Activated CD8-positive, alpha-beta memory T cell treated with anti-CD3 and anti-CD28 coated beads, Interleukin-2, amount 10 ng/mL, durations not matched to agents 7 days and 5 days (primary cell): ENCODE measurements at regions of chr11 and their contacts with region 1.

Region 1: DNA sequence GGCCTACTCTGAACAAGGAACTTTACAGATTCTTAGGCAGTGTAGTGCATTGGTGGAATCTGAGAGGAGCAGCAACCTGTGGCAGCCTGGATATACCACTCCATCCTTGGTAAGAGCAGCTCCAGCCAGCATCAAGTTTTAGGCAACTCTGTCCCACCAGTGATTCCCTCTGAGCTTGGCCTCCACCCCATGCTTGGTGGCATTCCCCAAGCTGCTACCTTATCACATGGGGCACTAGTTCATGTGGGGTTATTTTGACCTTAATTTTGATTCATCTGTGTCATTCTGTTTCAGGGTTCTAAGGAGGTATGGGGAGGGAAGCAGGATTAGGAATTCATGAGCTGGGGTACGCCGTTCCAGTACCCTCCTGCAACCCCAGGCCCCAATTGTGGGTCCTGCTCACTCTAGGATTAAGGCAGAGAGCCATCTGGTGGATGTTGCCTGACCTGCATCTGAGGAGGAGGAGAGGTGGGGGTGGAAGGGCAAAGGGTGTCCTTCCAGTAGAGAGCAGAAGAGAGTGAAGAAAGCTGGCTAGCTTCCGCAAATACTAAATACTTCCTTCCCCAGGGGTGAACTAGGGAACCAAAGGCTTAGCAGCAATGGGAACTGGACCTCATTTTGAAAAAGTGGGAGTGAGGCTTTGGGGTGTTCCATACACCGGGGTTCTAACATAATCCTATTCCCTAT is 10.5 kb downstream of the LRRC51 start:
- DNase-seq: peak; percentile 72
- ATAC-seq: peak; percentile 83
- H3K4me3 Mint-ChIP-seq: no peak overlapping the region
- H3K27ac Mint-ChIP-seq: no peak overlapping the region
- H3K4me1 Mint-ChIP-seq: peaks cover 5% of the 10 kb centered on the region
- H3K27me3 Mint-ChIP-seq: no peaks in the 10 kb centered on the region

Region 2: GRCh38 chr11:72012897-72013721 is 78.0 kb before region 1 on chr11:
- CTCF ChIA-PET with region 1: no interaction called
- DNase-seq: no peak
- ATAC-seq: no peak
- H3K4me3 Mint-ChIP-seq: no peak overlapping the region
- H3K27ac Mint-ChIP-seq: no peak overlapping the region
- H3K4me1 Mint-ChIP-seq: no peaks in the 10 kb centered on the region
- H3K27me3 Mint-ChIP-seq: no peaks in the 10 kb centered on the region

Region 3: GRCh38 chr11:72030472-72031045 is 60.6 kb before region 1 on chr11:
- CTCF ChIA-PET with region 1: interaction called, 91 read pairs
- DNase-seq: no peak
- ATAC-seq: no peak
- H3K4me3 Mint-ChIP-seq: no peak overlapping the region
- H3K27ac Mint-ChIP-seq: no peak overlapping the region
- H3K4me1 Mint-ChIP-seq: peaks cover 11% of the 10 kb centered on the region
- H3K27me3 Mint-ChIP-seq: no peaks in the 10 kb centered on the region

Region 4: GRCh38 chr11:72058416-72059034 is 32.6 kb before region 1 on chr11:
- CTCF ChIA-PET with region 1: no interaction called
- DNase-seq: no peak
- ATAC-seq: no peak
- H3K4me3 Mint-ChIP-seq: no peak overlapping the region
- H3K27ac Mint-ChIP-seq: no peak overlapping the region
- H3K4me1 Mint-ChIP-seq: peaks cover 8% of the 10 kb centered on the region
- H3K27me3 Mint-ChIP-seq: no peaks in the 10 kb centered on the region

Region 5: DNA sequence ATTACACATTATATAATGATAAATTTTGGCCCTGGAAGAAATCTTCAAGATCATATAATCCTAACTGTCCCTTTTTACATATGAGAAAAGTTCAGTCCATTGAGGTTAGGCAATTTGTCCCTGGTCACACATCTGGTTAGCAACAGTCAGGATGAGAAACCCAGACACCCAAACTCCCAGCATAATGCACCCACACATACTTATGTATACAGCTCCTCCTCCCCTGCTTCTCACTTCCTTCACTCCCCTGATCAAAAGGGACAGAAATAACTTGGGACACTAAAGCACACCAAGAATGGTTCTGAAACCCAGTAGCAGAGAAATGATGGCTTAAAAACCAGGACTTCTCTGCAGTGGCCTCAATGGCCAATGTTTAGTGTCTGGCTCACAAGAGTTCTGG is 21.9 kb before region 1 on chr11:
- CTCF ChIA-PET with region 1: no interaction called
- DNase-seq: no peak
- ATAC-seq: no peak
- H3K4me3 Mint-ChIP-seq: no peak overlapping the region
- H3K27ac Mint-ChIP-seq: peak overlapping the region; percentile 52
- H3K4me1 Mint-ChIP-seq: peaks cover 53% of the 10 kb centered on the region
- H3K27me3 Mint-ChIP-seq: no peaks in the 10 kb centered on the region

Region 6: GRCh38 chr11:72080975-72081644 is 10.0 kb before region 1 on chr11:
- CTCF ChIA-PET with region 1: interaction called, 17 read pairs
- DNase-seq: no peak
- ATAC-seq: no peak
- H3K4me3 Mint-ChIP-seq: peak overlapping the region; percentile 84
- H3K27ac Mint-ChIP-seq: peak overlapping the region; percentile 97
- H3K4me1 Mint-ChIP-seq: peaks cover 48% of the 10 kb centered on the region
- H3K27me3 Mint-ChIP-seq: no peaks in the 10 kb centered on the region

Region 7: DNA sequence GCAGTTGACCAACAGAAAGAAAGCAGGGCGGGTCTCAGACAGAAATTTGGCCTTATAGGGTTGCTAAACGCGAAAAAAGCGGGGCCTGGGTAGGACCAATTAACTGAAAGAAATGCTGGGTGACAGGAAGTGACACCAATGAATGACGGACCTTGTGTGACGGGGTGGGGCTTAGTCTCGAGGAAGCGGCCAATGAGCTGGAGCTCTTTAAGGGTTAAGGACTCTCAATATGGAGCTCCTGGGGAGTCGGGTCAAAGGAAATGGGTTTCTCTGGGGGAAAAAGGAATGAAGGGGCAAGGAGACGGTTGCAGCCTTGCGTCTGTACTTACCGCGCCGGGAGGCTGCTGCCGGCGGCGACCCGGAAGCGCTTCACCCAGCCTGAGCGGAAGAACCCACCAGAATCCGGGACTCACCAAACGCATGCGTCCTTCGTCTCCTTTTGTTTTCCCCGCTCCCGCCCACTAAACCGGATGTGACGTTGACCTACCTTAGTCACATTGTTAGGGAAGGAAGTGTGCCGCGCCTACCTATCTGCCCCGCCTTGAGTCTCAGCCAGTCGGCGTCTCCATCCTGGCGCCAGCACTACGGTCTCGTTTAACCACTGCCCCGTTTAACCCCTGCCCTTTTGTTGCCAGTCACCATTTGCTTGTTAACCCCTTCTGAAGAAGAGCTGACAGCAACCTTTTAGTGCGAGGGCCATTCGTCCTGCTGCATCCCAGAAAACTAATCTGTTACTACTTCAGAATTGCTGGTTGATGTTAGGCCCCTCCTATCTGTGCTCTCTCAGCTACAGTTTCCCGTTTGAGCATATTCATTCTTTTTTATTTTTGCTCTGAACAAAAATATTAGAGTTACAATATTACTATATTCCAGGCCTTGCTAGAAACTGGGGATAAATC is 21.4 kb after region 1 on chr11 and contains the start of gene ANAPC15:
- CTCF ChIA-PET with region 1: interaction called, 11 read pairs
- DNase-seq: peak; percentile 100
- ATAC-seq: peak; percentile 92
- H3K4me3 Mint-ChIP-seq: peak within 1 kb of the TSS; percentile 93
- H3K27ac Mint-ChIP-seq: peak within 1 kb of the TSS; percentile 98
- H3K4me1 Mint-ChIP-seq: peaks cover 23% of the 10 kb centered on the region
- H3K27me3 Mint-ChIP-seq: no peaks in the 10 kb centered on the region
- total RNA-seq, gene ANAPC15: 53.8 to 63.6 TPM

Region 8: GRCh38 chr11:72793425-72794367 is 702.5 kb after region 1 on chr11 and contains the start of gene STARD10:
- CTCF ChIA-PET with region 1: no interaction called
- DNase-seq: peak; percentile 96
- ATAC-seq: peak; percentile 97
- H3K4me3 Mint-ChIP-seq: peak within 1 kb of the TSS; percentile 87
- H3K27ac Mint-ChIP-seq: peak within 1 kb of the TSS; percentile 98
- H3K4me1 Mint-ChIP-seq: peaks cover 24% of the 10 kb centered on the region
- H3K27me3 Mint-ChIP-seq: no peaks in the 10 kb centered on the region
- total RNA-seq, gene STARD10: 8.4 to 18.4 TPM